AG04450 (cell line): ENCODE measurements at regions of chr18 and their contacts with region 1.

Region 1: DNA sequence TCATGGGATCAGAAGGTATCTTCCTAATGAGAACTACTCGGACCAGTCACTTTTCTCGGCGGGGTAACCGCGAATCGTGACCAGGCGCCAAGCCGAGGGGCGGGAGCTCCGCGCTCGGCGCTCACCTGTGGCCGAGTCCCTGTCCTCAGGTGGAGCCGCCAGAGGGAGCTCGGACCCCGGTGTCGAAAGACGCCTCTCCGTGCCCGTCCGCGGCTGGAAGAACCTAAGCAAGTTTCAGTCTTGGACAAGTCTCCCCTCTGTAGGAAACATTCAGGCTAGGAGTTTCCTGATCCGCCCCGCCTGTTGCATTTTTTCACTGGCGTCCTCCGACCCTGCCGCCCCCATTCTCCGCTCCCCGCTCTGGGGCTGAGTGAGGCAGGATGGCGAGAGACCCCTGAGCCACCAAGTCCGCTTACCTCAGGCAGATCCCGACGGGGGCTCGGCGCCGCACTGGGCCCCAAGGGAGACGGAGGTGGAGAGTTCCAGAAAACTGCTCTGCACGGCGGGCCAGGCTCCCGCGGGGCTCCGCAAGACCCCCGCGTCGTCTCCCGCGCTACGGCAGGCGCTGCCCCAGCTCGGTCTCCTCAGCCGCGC is 478 bp downstream of the DSEL start:
- DNase-seq: peak; percentile 55
- H3K4me3 ChIP-seq: peak overlapping the region; percentile 84
- H3K27ac ChIP-seq: peak overlapping the region; percentile 91
- H3K27me3 ChIP-seq: no peaks in the 10 kb centered on the region
- CTCF ChIP-seq: peak; percentile 78

Region 2: DNA sequence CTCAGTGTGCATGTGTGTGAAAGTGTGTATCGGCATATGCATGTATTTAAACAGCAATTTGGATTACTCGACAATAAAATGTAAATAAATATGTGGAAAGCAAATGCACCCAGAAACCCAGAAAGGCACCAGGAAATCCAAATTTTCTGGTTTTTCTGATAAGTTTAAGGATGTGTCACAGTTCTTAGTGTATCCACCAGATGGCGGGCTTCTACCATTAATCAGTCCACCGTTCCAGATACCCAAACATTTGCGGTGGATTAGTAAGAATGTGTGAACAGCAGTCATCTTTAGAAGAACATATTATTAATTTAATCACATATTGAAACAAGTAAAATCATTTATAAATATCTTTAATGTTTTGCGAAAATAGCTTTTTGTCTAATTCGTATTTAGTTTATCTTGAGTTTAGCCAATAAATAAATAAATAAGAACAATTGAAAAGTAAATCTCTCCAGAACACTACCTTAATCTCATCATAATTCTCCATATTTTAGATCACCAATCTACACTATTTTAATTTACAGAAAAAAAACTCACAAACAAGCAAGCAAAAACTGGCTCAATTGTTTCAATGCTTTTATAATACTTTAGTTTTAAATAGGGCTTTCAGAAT is 298.4 kb before region 1 on chr18:
- CTCF ChIA-PET with region 1: interaction called, 10 read pairs
- POLR2A ChIA-PET with region 1: interaction called, 11 read pairs
- DNase-seq: peak; percentile 61
- H3K4me3 ChIP-seq: no peak overlapping the region
- H3K27ac ChIP-seq: no peak overlapping the region
- H3K27me3 ChIP-seq: no peaks in the 10 kb centered on the region
- CTCF ChIP-seq: peak; percentile 70

Region 3: GRCh38 chr18:67496469-67496868 is 19.6 kb before region 1 on chr18:
- CTCF ChIA-PET with region 1: no interaction called
- POLR2A ChIA-PET with region 1: no interaction called
- DNase-seq: no peak
- H3K4me3 ChIP-seq: no peak overlapping the region
- H3K27ac ChIP-seq: no peak overlapping the region
- H3K27me3 ChIP-seq: no peaks in the 10 kb centered on the region
- CTCF ChIP-seq: no peak

Region 4: DNA sequence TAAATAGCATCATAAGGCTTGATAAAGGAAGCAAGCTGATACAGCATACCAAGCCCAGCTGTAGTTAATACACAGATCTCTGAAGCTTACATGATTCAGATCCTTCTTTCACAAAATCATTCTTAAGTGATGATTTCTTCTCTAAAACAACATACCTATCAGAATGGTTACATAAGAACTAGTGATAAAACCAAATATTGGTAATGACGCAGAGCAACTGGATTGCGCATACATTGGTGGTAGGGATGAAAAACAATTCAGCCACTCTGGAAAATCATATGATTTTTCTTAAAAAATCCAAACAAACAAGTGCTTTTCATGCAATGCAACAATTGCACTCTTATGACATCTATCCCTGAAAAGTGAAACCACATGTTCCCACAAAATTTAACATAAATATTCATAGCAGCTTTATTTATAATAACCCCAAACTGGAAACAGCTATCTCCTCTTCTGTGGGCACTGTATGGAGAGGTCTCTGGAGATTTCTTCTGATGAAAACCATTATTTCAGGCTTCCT is 154.0 kb after region 1 on chr18:
- CTCF ChIA-PET with region 1: no interaction called
- POLR2A ChIA-PET with region 1: interaction called, 17 read pairs
- DNase-seq: peak; percentile 91
- H3K4me3 ChIP-seq: no peak overlapping the region
- H3K27ac ChIP-seq: peak overlapping the region; percentile 88
- H3K27me3 ChIP-seq: no peaks in the 10 kb centered on the region
- CTCF ChIP-seq: no peak

Region 5: DNA sequence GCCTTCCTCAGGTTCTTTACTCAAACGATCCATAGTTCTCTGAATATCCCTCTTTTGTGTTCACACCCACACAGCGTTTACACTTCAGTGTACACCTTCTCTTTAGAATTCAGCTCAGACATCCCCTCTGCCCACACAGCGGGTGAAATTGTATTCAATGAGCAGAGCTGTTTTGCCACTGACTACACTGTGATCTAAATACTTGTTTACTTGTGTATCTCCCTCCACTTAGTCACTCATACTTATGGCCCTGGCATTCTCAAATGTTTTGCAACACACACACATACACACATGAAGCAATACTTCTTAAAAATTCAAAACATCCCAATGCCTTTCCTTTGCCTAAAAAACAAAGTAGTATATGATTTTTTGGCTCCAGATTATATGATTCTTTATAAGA is 901.8 kb after region 1 on chr18:
- CTCF ChIA-PET with region 1: interaction called, 10 read pairs
- POLR2A ChIA-PET with region 1: interaction called, 4 read pairs
- DNase-seq: no peak
- H3K4me3 ChIP-seq: no peak overlapping the region
- H3K27ac ChIP-seq: no peak overlapping the region
- H3K27me3 ChIP-seq: no peaks in the 10 kb centered on the region
- CTCF ChIP-seq: no peak